MCF 10A (cell line): ENCODE measurements at regions of chr2 and their contacts with region 1.

Region 1: GRCh38 chr2:26982102-26982742 is 11.8 kb downstream of the MAPRE3 start:
- DNase-seq: peak; percentile 76
- H3K4me3 Mint-ChIP-seq: no peak overlapping the region
- H3K27ac Mint-ChIP-seq: no peak overlapping the region
- H3K4me1 Mint-ChIP-seq: peaks cover 14% of the 10 kb centered on the region
- H3K27me3 Mint-ChIP-seq: no peaks in the 10 kb centered on the region
- CTCF ChIP-seq: peak; percentile 35

Region 2: GRCh38 chr2:26970244-26970920 is 11.8 kb before region 1 on chr2 and contains the start of gene MAPRE3:
- CTCF ChIA-PET with region 1: interaction called, 3 read pairs
- POLR2A ChIA-PET with region 1: interaction called, 16 read pairs
- intact Hi-C with region 1: no loop called
- DNase-seq: peak; percentile 64
- H3K4me3 Mint-ChIP-seq: peak within 1 kb of the TSS; percentile 88
- H3K27ac Mint-ChIP-seq: peak within 1 kb of the TSS; percentile 80
- H3K4me1 Mint-ChIP-seq: peaks cover 23% of the 10 kb centered on the region
- H3K27me3 Mint-ChIP-seq: peaks cover 22% of the 10 kb centered on the region
- CTCF ChIP-seq: no peak
- total RNA-seq, gene MAPRE3: 18.0 and 26.0 TPM in 2 replicates